CD8-positive, alpha-beta T cell (primary cell): ENCODE measurements at regions of chr17 and their contacts with region 1.

Region 1: DNA sequence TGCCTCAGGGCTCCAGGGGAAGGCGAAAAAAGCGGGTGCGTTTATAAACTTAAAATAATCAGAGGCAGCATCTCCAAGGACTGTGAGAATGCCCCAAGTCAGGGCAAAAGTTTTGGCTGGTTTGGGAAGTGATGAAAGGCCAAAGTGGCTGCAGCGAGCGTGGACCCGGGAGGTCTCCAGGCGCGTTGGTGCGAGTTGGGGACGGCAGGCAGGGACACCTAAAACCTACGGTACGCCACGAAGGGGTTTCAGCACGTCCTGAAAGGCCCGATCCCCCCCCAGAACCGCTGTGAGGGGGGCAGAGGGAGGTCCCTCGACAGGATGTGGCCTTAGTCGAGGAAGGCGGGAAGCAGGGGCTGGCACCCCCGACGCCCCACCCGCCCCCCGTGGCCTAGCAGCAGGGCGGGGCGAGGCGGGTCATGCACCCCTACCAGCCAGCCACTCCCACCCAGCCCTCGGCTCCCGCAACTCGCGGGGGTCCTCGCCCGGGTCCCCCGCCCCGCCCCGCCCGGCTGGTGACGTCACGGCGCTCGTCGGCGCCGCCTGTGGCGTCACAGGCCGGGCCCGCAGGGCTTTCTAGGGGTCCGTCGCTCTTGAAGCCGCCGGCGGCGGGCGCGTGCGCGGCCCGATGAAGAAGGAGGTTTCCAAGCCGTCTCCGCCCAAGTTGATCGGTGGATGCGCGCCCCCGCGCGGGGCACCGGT is at the start of gene MYCBPAP:
- DNase-seq: peak; percentile 68 to 91 (median 76)
- ATAC-seq: peak; percentile 73
- H3K4me3 ChIP-seq: peak within 1 kb of the TSS; percentile 68 to 77
- H3K4me3 Mint-ChIP-seq: peak within 1 kb of the TSS; percentile 95
- H3K27ac ChIP-seq: peak within 1 kb of the TSS; percentile 50 to 56
- H3K27ac Mint-ChIP-seq: peak within 1 kb of the TSS; percentile 94
- H3K4me1 ChIP-seq: peaks cover 22% of the 10 kb centered on the region
- H3K4me1 Mint-ChIP-seq: peaks cover 43% of the 10 kb centered on the region
- H3K27me3 ChIP-seq: no peaks in the 10 kb centered on the region
- H3K27me3 Mint-ChIP-seq: no peaks in the 10 kb centered on the region
- CTCF ChIP-seq: no peak
- total RNA-seq, gene MYCBPAP: 3.4 to 3.5 TPM

Region 2: DNA sequence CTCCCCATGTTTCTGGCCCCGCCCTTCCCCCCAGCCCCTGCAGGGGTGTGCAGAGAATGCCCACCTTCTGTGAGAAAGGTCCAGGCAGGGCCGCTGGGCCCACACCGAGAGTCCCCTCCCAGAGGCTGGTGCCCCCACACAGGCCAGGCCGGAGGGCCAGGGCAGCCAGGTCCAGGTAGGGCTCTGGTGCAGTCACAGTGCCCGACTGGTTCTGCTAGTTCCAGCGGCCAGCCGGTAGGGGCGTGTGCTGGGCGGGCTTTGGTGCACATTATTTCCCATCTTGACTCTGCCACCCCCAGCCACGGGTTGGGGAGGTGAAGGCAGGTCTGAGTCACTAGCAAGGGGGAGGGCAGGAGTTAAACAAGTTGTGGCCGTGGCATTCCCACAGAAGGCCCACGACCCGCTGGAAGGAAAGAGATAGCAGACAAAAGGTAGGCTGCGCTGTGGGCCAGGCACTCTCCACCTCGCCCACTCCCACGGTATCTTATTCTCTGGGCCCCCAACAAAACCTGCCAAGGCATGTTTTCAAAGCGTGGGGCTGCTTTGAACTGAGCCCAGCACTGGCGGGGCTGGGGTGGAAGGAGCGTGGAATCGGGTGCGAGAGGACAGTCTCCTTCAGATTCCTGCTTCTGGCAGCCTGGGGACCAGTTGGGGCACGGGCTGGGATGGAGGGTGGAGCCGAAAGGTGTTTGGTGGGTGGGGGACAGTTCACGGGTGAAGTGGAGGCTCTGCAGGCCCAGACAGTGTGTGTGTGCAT is 26.4 kb after region 1 on chr17:
- CTCF ChIA-PET with region 1: no interaction called
- POLR2A ChIA-PET with region 1: no interaction called
- intact Hi-C with region 1: no loop called
- DNase-seq: no peak
- ATAC-seq: peak; percentile 58
- H3K4me3 ChIP-seq: no peak overlapping the region
- H3K4me3 Mint-ChIP-seq: no peak overlapping the region
- H3K27ac ChIP-seq: no peak overlapping the region
- H3K27ac Mint-ChIP-seq: no peak overlapping the region
- H3K4me1 ChIP-seq: peaks cover 21% of the 10 kb centered on the region
- H3K4me1 Mint-ChIP-seq: peaks cover 16% of the 10 kb centered on the region
- H3K27me3 ChIP-seq: peaks cover 10 to 32% of the 10 kb centered on the region in 2 experiments
- H3K27me3 Mint-ChIP-seq: peaks cover 47% of the 10 kb centered on the region
- CTCF ChIP-seq: no peak

Region 3: DNA sequence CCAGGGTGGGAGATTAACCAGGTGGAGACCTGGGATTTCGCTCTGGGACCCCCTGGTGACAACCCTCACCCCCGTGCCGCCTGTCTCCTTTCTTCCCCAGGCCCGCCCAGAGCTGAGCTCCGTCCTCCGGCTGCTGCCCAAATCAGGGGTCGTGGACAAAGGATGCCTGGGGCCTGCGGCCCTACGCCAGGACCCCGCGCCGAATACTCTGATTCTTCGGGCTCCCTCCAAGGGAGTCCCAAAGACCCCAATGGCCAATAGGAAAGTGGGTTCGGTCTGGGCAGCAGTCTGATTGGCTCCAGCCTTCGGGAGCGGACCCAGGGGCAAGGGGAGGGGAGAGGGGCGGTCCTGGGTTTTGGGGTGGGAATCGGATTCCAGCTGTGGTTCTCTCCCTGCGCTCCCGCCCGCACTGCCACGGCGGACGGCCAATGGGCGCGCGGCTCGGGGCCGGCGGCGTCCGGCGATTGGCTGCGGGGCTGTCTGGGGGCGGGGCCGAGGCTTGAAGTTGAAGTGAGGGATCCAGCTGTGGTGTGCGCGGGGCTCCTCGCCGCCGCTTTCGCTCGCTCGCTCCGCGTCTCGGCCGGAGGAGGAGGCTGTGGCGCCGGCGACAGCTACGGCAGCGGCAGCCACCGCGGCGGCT is 52.3 kb after region 1 on chr17 and contains the start of gene CACNA1G:
- CTCF ChIA-PET with region 1: no interaction called
- POLR2A ChIA-PET with region 1: no interaction called
- intact Hi-C with region 1: loop called in 1 of 2 experiments (anchors 1 kb)
- DNase-seq: peak; percentile 74 to 91 (median 85)
- ATAC-seq: peak; percentile 84
- H3K4me3 ChIP-seq: peak within 1 kb of the TSS; percentile 47 to 54
- H3K4me3 Mint-ChIP-seq: peak within 1 kb of the TSS; percentile 78
- H3K27ac ChIP-seq: no peak within 1 kb of the TSS
- H3K27ac Mint-ChIP-seq: no peak within 1 kb of the TSS
- H3K4me1 ChIP-seq: peaks cover 29% of the 10 kb centered on the region
- H3K4me1 Mint-ChIP-seq: peaks cover 32% of the 10 kb centered on the region
- H3K27me3 ChIP-seq: peaks cover 29 to 41% of the 10 kb centered on the region in 2 experiments
- H3K27me3 Mint-ChIP-seq: peaks cover 48% of the 10 kb centered on the region
- CTCF ChIP-seq: no peak
- total RNA-seq, gene CACNA1G: 0.03 TPM in 1 of 2 experiments, not detected in the other

Region 4: DNA sequence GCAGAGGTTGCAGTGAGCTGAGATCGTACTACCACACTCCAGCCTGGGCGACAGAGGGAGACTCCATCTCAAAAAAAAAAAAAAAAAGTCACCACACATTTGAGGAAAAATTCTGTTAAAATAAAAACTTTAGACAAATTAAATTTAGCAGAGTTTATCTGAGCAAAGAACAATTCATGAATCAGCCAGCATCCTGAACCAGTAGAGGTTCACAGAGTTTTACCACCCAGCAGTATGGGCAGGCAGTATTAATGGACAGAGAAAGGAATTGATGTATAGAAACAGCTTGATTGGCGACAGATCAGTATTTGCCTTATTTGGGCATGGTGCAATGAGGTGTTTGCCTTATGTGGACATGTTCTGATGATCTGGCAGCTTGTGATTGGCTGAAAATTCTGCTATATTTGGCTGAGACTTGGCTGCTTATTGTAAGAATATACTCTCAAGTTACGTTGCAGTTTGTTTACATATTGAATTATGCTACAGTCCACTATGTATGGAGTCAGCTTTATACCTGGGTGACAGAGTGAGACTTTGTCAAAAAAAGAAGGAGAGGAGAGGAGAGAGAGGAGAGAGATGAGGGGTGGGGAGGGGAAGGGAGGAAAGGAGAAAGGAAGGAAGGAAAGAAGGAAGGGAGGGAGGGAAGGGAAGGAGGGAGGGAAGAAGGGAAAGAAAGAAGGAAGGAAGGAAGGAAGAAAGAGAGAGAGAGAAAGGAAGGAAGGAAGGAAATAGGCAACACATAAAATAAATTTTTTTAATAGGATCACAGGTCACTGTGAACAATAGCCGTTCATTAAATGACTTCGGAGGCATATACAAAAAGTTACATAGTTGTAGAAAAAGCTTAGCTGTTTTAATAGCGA is 141.3 kb after region 1 on chr17:
- CTCF ChIA-PET with region 1: no interaction called
- POLR2A ChIA-PET with region 1: no interaction called
- intact Hi-C with region 1: no loop called
- DNase-seq: no peak
- ATAC-seq: no peak
- H3K4me3 ChIP-seq: no peak overlapping the region
- H3K4me3 Mint-ChIP-seq: no peak overlapping the region
- H3K27ac ChIP-seq: no peak overlapping the region
- H3K27ac Mint-ChIP-seq: no peak overlapping the region
- H3K4me1 ChIP-seq: no peaks in the 10 kb centered on the region
- H3K4me1 Mint-ChIP-seq: no peaks in the 10 kb centered on the region
- H3K27me3 ChIP-seq: no peaks in the 10 kb centered on the region
- H3K27me3 Mint-ChIP-seq: peaks cover 2% of the 10 kb centered on the region
- CTCF ChIP-seq: no peak